ENCODE measurements at regions of chr20 and their contacts with region 1.

Region 1: DNA sequence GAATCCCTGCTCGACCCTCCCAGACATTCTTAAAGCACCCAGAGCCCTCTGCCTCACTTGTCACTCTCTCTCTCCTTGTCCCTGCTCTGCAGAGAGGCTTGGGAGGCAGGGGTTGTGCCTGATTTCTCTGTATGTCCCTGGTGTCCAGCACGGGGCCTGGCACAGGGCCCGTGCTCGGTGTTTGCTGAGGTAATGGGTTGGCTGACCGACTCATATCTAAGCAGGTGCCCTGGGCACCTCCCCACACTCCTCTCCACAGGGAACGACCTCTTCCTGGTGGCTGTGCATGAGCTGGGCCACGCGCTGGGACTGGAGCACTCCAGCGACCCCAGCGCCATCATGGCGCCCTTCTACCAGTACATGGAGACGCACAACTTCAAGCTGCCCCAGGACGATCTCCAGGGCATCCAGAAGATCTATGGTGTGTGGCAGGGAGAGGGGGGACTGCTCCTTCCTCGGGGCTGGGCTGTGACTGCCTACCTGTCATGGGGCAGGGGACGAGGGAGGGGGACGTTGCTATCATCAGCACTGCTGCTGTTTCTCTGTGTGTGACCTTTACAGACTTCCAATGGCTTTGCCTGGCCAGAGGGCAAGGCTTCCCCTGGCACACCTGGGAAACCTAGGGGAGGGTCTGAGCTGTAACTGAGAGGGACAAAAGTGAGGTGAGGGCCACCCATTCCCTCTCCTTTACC is 14.2 kb downstream of the MMP24OS start:
- DNase-seq: no peak
- H3K4me3 ChIP-seq: peak overlapping the region in 3 of 4 experiments; percentile 9 to 39 (median 16); a peak in 4 of 8 replicates
- H3K27ac ChIP-seq: peak overlapping the region; percentile 99
- H3K4me1 ChIP-seq: peaks cover 16 to 39% (median 30%) of the 10 kb centered on the region in 4 experiments
- H3K27me3 ChIP-seq: no peaks in the 10 kb centered on the region
- CTCF ChIP-seq: no peak
- EP300 ChIP-seq: no peak
- POLR2A ChIP-seq: no peak
- RAD21 ChIP-seq: no peak

Region 2: GRCh38 chr20:35240083-35240812 is 23.4 kb before region 1 on chr20:
- CTCF ChIA-PET with region 1: interaction called, 5 read pairs
- POLR2A ChIA-PET with region 1: interaction called, 17 read pairs
- DNase-seq: no peak
- H3K4me3 ChIP-seq: no peak overlapping the region
- H3K27ac ChIP-seq: no peak overlapping the region
- H3K4me1 ChIP-seq: peaks cover 2 to 8% (median 3%) of the 10 kb centered on the region in 4 experiments; a peak in 5 of 7 replicates
- H3K27me3 ChIP-seq: no peaks in the 10 kb centered on the region
- CTCF ChIP-seq: no peak
- EP300 ChIP-seq: no peak
- POLR2A ChIP-seq: no peak
- RAD21 ChIP-seq: no peak

Region 3: GRCh38 chr20:35252037-35252461 is 11.6 kb before region 1 on chr20:
- CTCF ChIA-PET with region 1: interaction called, 5 read pairs
- POLR2A ChIA-PET with region 1: interaction called, 52 read pairs
- DNase-seq: no peak
- H3K4me3 ChIP-seq: no peak overlapping the region
- H3K27ac ChIP-seq: no peak overlapping the region
- H3K4me1 ChIP-seq: 0 out of 7 replicates have a peak, but pooled peaks cover 0 to 2% (median 0%) of the 10 kb centered on the region in 4 experiments
- H3K27me3 ChIP-seq: no peaks in the 10 kb centered on the region
- CTCF ChIP-seq: no peak
- EP300 ChIP-seq: no peak
- POLR2A ChIP-seq: no peak
- RAD21 ChIP-seq: no peak